Right cardiac atrium (tissue), 5 donors: ENCODE measurements at regions of chr12 and their contacts with region 1.

Region 1: GRCh38 chr12:67943226-67943892 is 45.9 kb upstream of the IFNG-AS1 start:
- DNase-seq: peak in 1 of 3 donors; percentile 59
- ATAC-seq: peak; percentile 78 to 79
- H3K4me3 ChIP-seq: no peak overlapping the region
- H3K27ac ChIP-seq: no peak overlapping the region
- H3K4me1 ChIP-seq: no peaks in the 10 kb centered on the region
- H3K27me3 ChIP-seq: no peaks in the 10 kb centered on the region

Region 2: GRCh38 chr12:67433385-67434175 is 509.8 kb before region 1 on chr12:
- intact Hi-C with region 1: loop called in 3 of 4 experiments (anchors 5 to 10 kb)
- DNase-seq: no peak
- ATAC-seq: no peak
- H3K4me3 ChIP-seq: no peak overlapping the region
- H3K27ac ChIP-seq: no peak overlapping the region
- H3K4me1 ChIP-seq: no peaks in the 10 kb centered on the region
- H3K27me3 ChIP-seq: no peaks in the 10 kb centered on the region

Region 3: DNA sequence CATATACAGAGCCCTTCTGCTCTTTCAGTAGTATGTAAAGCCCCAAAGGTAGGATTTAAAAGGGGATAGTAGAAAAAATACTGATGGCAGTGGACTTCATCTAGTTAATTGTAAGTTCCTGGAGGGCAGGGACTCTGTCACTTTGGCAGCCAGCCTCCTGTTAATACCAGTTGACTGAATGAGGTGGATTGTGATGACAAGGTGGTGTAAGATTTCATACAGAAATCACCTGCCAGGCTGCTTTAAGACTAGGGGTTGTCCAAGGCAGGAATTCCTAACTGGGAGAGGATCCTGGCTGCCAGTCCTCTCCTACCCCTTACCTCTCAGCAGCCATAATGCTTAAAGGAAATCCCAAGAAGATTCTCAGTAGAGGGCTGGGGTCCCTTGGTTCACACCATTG is 287.5 kb before region 1 on chr12:
- intact Hi-C with region 1: loop called in 2 of 4 experiments (anchors 2 to 5 kb)
- DNase-seq: no peak
- ATAC-seq: peak in 1 of 2 donors; percentile 37
- H3K4me3 ChIP-seq: no peak overlapping the region
- H3K27ac ChIP-seq: peak overlapping the region; percentile 59
- H3K4me1 ChIP-seq: peaks cover 7% of the 10 kb centered on the region
- H3K27me3 ChIP-seq: no peaks in the 10 kb centered on the region

Region 4: DNA sequence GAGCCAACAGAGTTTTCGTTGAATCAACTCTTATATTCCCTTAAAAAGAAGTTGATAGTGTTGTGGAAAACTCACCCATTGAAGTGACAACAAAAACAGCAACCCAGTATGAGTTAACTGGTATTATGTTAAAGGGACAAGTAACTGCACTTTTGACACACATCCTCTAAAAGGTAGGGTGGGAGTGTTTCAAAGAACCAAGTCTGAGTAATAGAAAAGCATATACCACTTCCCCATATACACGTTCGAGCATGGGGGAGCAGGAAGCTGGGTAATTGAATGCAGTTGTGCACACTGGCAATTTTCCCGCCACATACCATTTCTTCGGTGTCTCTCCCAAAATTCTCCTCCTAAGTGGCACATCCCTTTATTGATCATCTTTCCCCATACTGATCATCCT is 77.3 kb after region 1 on chr12:
- intact Hi-C with region 1: no loop called
- DNase-seq: no peak
- ATAC-seq: no peak
- H3K4me3 ChIP-seq: no peak overlapping the region
- H3K27ac ChIP-seq: no peak overlapping the region
- H3K4me1 ChIP-seq: no peaks in the 10 kb centered on the region
- H3K27me3 ChIP-seq: no peaks in the 10 kb centered on the region